OCI-LY7 (cell line): ENCODE measurements at regions of chr7 and their contacts with region 1.

Region 1: GRCh38 chr7:20598459-20599309 is 16.8 kb upstream of the ABCB5 start:
- DNase-seq: peak; percentile 50
- H3K4me3 ChIP-seq: no peak overlapping the region
- H3K27ac ChIP-seq: no peak overlapping the region
- H3K4me1 ChIP-seq: no peaks in the 10 kb centered on the region
- CTCF ChIP-seq: peak; percentile 93

Region 2: GRCh38 chr7:19121977-19122588 is 1476.6 kb before region 1 on chr7:
- CTCF ChIA-PET with region 1: no interaction called
- POLR2A ChIA-PET with region 1: no interaction called
- intact Hi-C with region 1: no loop called
- DNase-seq: peak; percentile 1
- H3K4me3 ChIP-seq: no peak overlapping the region
- H3K27ac ChIP-seq: no peak overlapping the region
- H3K4me1 ChIP-seq: no peaks in the 10 kb centered on the region
- CTCF ChIP-seq: peak; percentile 78

Region 3: GRCh38 chr7:19708397-19709248 is 890.1 kb before region 1 on chr7 and contains the start of gene POLR1F:
- CTCF ChIA-PET with region 1: interaction called, 8 read pairs
- POLR2A ChIA-PET with region 1: interaction called, 3 read pairs
- intact Hi-C with region 1: loop called (anchors 2 kb)
- DNase-seq: peak; percentile 95
- H3K4me3 ChIP-seq: peak within 1 kb of the TSS; percentile 98
- H3K27ac ChIP-seq: peak within 1 kb of the TSS; percentile 47
- H3K4me1 ChIP-seq: peaks cover 26% of the 10 kb centered on the region
- CTCF ChIP-seq: peak; percentile 86
- total RNA-seq, gene POLR1F: 17.7 and 25.1 TPM in 2 replicates

Region 4: GRCh38 chr7:19754521-19755116 is 844.1 kb before region 1 on chr7:
- CTCF ChIA-PET with region 1: no interaction called
- POLR2A ChIA-PET with region 1: interaction called, 3 read pairs
- intact Hi-C with region 1: loop called (anchors 2 kb)
- DNase-seq: peak; percentile 29
- H3K4me3 ChIP-seq: no peak overlapping the region
- H3K27ac ChIP-seq: no peak overlapping the region
- H3K4me1 ChIP-seq: peaks cover under 1% of the 10 kb centered on the region
- CTCF ChIP-seq: peak; percentile 94

Region 5: GRCh38 chr7:19982841-19983835 is 615.5 kb before region 1 on chr7:
- CTCF ChIA-PET with region 1: no interaction called
- POLR2A ChIA-PET with region 1: no interaction called
- intact Hi-C with region 1: loop called (anchors 5 kb)
- DNase-seq: peak; percentile 41
- H3K4me3 ChIP-seq: no peak overlapping the region
- H3K27ac ChIP-seq: no peak overlapping the region
- H3K4me1 ChIP-seq: no peaks in the 10 kb centered on the region
- CTCF ChIP-seq: peak; percentile 75

Region 6: GRCh38 chr7:20330240-20330927 is 268.3 kb before region 1 on chr7 and contains the start of gene ITGB8:
- CTCF ChIA-PET with region 1: no interaction called
- POLR2A ChIA-PET with region 1: no interaction called
- intact Hi-C with region 1: loop called (anchors 5 kb)
- DNase-seq: no peak
- H3K4me3 ChIP-seq: peak within 1 kb of the TSS; percentile 29
- H3K27ac ChIP-seq: no peak within 1 kb of the TSS
- H3K4me1 ChIP-seq: peaks cover 10% of the 10 kb centered on the region
- CTCF ChIP-seq: no peak
- total RNA-seq, gene ITGB8: not detected in 2 replicates

Region 7: DNA sequence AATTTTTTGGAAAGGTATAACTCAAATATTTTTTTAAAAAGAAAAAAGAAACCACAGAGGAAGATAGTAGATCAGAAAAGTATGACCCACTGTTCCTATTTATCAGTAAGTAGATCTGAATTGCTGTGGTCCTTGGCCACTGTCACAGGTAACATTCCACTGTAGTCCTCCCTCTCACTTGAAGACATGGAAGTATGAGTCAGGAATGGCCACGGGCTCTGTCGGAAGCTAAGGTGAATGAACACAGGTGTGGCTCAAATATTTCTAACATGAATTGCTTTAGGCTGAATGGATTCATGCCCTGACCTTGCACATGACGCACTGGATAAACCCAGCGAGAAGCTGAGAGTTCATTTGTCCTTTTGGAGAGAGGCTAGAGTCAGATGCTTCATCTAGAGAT is 412.4 kb after region 1 on chr7:
- CTCF ChIA-PET with region 1: no interaction called
- POLR2A ChIA-PET with region 1: no interaction called
- intact Hi-C with region 1: no loop called
- DNase-seq: no peak
- H3K4me3 ChIP-seq: no peak overlapping the region
- H3K27ac ChIP-seq: no peak overlapping the region
- H3K4me1 ChIP-seq: no peaks in the 10 kb centered on the region
- CTCF ChIP-seq: no peak